Common myeloid progenitor, CD34-positive (primary cell): ENCODE measurements at regions of chr6 and their contacts with region 1.

Region 1: DNA sequence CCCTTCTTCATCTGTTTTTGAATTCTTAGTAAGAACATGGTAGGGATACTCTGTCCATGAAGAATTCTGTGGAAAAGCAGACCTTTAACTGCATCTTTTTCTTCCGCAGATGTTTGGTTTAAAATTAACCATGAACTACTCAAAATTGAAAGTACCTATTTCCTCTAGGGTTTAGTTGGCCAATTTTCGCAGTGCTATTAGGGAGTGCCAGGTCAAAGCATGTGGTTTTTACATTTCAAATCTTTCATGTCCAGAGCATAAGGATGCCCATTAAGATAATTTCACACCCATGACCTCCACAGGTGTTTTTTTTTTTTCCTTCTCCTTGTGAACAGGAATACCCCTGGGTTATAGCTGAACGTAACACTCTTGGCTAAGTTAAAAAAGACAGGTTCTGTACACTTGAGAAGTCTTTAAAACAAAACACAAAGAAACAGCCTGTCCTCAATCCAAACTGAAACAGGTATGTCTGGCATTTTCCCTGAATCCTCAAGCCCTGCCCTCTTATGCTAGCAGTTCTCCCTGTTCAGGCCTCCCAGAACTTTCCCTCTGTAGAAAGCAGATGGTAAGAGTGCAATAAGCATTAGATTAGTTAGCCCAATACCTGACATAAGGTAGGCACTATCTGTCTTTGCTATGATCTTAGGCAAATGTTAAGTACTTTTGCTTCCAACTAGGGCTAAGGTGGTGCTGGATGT is 67.1 kb downstream of the ELOVL5 start:
- DNase-seq: no peak
- H3K4me3 ChIP-seq: no peak overlapping the region
- H3K27ac ChIP-seq: no peak overlapping the region
- H3K4me1 ChIP-seq: peaks cover 0 to 22% (median 7%) of the 10 kb centered on the region in 4 experiments
- H3K27me3 ChIP-seq: no peaks in the 10 kb centered on the region

Region 2: DNA sequence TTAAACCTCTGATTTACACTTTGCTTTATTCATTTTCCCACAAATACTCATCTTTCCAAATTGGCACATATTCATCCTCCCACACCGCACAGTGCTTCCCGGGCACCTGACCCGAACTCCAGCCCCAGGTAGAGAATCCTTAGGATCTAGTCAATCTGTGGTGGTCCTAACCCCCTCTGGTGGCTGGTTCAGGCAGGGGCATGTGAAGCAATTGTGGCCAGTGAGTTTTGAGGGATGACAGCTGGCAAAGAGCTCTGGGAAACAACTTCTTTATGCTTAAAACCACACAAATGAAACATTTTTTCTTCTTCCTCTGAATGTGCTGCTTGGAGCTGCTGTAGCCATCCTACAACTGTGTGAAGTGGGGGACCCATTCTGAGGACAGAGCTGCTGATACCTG is 12.4 kb after region 1 on chr6:
- CTCF ChIA-PET with region 1: interaction called, 20 read pairs
- POLR2A ChIA-PET with region 1: interaction called, 3 read pairs
- DNase-seq: peak; percentile 46 to 71 (median 70)
- H3K4me3 ChIP-seq: no peak overlapping the region
- H3K27ac ChIP-seq: no peak overlapping the region
- H3K4me1 ChIP-seq: peaks cover 7 to 25% (median 13%) of the 10 kb centered on the region in 4 experiments
- H3K27me3 ChIP-seq: no peaks in the 10 kb centered on the region

Region 3: DNA sequence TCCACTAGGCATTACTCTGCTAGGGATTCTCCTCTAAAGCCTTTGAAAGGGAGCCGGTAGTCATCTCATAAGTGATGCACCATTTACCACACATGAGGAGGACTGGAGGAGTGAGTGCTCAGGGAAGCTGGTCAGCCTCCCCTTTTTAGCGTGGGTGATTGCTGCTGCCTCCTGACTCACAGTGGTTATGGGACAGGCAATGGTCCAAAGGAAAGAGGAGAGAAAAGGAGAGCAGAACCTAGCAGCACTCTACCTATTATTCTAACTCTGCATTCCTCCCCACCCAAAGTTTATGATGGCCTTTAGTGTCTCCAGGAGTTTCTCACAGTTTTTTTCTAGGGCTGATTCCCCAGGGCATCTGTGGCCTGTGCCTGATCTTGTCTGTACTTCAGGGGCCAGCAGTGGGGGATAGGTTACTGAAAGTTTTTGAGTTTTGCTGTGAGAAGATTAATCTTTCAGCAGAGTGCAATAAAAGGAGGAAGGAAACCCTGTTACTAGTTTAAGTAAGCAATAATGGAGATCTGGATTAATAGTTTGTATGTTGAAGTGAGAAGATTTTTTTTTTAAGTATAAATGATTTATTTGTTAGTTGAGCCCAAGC is 299.6 kb after region 1 on chr6:
- CTCF ChIA-PET with region 1: no interaction called
- POLR2A ChIA-PET with region 1: no interaction called
- DNase-seq: peak in 1 of 3 donors; percentile 31
- H3K4me3 ChIP-seq: no peak overlapping the region
- H3K27ac ChIP-seq: peak overlapping the region in 1 of 2 experiments; percentile 17
- H3K4me1 ChIP-seq: peaks cover 0 to 28% (median 6%) of the 10 kb centered on the region in 4 experiments
- H3K27me3 ChIP-seq: no peaks in the 10 kb centered on the region